ENCODE measurements at regions of chr10 and their contacts with region 1.

Region 1: GRCh38 chr10:114103284-114103683 is 59.6 kb downstream of the ADRB1 start:
- DNase-seq: peak; percentile 64
- ATAC-seq: peak; percentile 64
- H3K4me3 ChIP-seq: no peak overlapping the region
- H3K27ac ChIP-seq: no peak overlapping the region
- H3K4me1 ChIP-seq: peaks cover 16% of the 10 kb centered on the region; the same call in 1 of the 2 replicates
- H3K27me3 ChIP-seq: no peaks in the 10 kb centered on the region
- CTCF ChIP-seq: peak; percentile 61

Region 2: GRCh38 chr10:113704637-113705343 is 398.5 kb before region 1 on chr10:
- CTCF ChIA-PET with region 1: interaction called, 3 read pairs
- POLR2A ChIA-PET with region 1: no interaction called
- intact Hi-C with region 1: loop called (anchors 1 kb)
- DNase-seq: peak; percentile 51
- ATAC-seq: peak; percentile 73
- H3K4me3 ChIP-seq: no peak overlapping the region
- H3K27ac ChIP-seq: no peak overlapping the region
- H3K4me1 ChIP-seq: peaks cover 8% of the 10 kb centered on the region; the same call in 1 of the 2 replicates
- H3K27me3 ChIP-seq: no peaks in the 10 kb centered on the region
- CTCF ChIP-seq: peak; percentile 73

Region 3: DNA sequence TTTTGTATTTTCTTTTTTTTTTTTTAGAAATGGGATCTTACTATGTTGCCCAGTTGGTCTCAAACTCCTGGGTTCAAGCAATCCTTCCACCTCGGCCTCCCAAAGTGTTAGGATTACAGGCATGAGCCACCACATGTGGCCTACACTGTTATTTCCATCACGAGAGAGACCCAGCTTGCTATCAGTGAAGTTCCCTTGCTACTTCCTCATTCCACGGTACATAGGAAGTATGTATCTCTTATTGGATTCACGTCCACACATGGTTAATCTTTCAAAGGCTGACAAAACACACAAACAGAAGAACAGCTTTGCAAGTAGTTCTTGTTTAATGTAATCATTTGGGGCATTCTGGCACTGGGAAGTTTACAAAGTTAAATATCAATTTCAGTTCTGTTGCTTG is 300.3 kb before region 1 on chr10:
- CTCF ChIA-PET with region 1: interaction called, 4 read pairs
- POLR2A ChIA-PET with region 1: no interaction called
- intact Hi-C with region 1: loop called (anchors 1 kb)
- DNase-seq: no peak
- ATAC-seq: no peak
- H3K4me3 ChIP-seq: no peak overlapping the region
- H3K27ac ChIP-seq: no peak overlapping the region
- H3K4me1 ChIP-seq: no peaks in the 10 kb centered on the region
- H3K27me3 ChIP-seq: peaks cover 11% of the 10 kb centered on the region; the same call in 1 of the 2 replicates
- CTCF ChIP-seq: no peak